Endothelial cell of umbilical vein (primary cell): ENCODE measurements at regions of chr15 and their contacts with region 1.

Region 1: GRCh38 chr15:64702816-64703646 is 72.4 kb downstream of the RBPMS2 start:
- DNase-seq: peak; percentile 94
- H3K4me3 ChIP-seq: peak overlapping the region; percentile 84 to 90 (median 88)
- H3K27ac ChIP-seq: peak overlapping the region; percentile 48
- H3K4me1 ChIP-seq: peaks cover 42% of the 10 kb centered on the region
- H3K27me3 ChIP-seq: no peaks in the 10 kb centered on the region
- CTCF ChIP-seq: no peak
- POLR2A ChIP-seq: peak; percentile 97

Region 2: DNA sequence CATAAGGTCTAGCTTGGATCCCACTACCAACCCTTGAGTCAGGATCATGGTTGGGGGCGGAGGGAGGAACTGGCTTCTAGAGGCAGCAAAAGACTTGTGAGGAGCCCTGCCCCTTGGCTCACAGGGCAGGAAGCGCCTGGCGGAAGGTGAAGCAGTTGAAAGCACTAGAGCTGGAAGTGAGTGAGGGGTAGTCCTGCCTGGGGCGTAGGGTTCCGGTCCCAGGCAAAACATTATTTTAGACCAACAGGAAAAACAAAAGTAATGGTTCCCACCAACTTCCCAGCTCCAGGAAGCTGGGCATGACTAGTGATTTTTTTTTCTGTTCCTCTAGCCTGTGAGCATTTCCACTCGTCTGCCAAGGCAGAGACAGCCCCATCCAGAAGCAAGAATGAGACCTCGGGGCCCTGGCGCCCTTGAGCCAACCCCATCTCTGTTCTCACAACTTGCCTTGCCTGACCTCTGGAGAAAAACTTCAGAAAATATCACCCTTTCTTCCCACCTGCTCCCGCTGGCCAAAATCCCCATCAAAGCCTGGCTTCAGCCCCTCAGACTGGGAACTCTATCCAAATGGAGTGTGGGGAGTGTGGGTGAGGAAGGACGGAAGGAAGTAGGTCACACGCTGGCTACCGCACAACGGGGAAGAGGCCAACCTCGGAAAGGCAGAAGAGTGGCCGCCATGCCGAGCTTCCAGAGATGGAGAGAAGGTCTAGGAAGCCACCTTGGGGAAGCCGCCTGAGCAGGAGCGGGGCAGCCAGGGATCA is 14.9 kb after region 1 on chr15:
- CTCF ChIA-PET with region 1: interaction called, 3 read pairs
- POLR2A ChIA-PET with region 1: no interaction called
- dilution Hi-C with region 1: no loop called
- intact Hi-C with region 1: loop called (anchors 2 kb)
- DNase-seq: peak; percentile 65
- H3K4me3 ChIP-seq: no peak overlapping the region
- H3K27ac ChIP-seq: no peak overlapping the region
- H3K4me1 ChIP-seq: peaks cover 13% of the 10 kb centered on the region
- H3K27me3 ChIP-seq: no peaks in the 10 kb centered on the region
- CTCF ChIP-seq: no peak
- POLR2A ChIP-seq: no peak

Region 3: GRCh38 chr15:64961013-64961412 is 258.0 kb after region 1 on chr15:
- CTCF ChIA-PET with region 1: no interaction called
- POLR2A ChIA-PET with region 1: no interaction called
- dilution Hi-C with region 1: no loop called
- intact Hi-C with region 1: no loop called
- DNase-seq: no peak
- H3K4me3 ChIP-seq: no peak overlapping the region
- H3K27ac ChIP-seq: no peak overlapping the region
- H3K4me1 ChIP-seq: no peaks in the 10 kb centered on the region
- H3K27me3 ChIP-seq: no peaks in the 10 kb centered on the region
- CTCF ChIP-seq: no peak
- POLR2A ChIP-seq: no peak